Activated CD8-positive, alpha-beta T cell treated with anti-CD3 and anti-CD28 coated beads for 36 hours (primary cell): ENCODE measurements at regions of chr1 and their contacts with region 1.

Region 1: GRCh38 chr1:117128323-117129079 is 7.0 kb upstream of the TRIM45 start:
- DNase-seq: no peak
- ATAC-seq: no peak
- H3K4me3 Mint-ChIP-seq: no peak overlapping the region
- H3K27ac Mint-ChIP-seq: no peak overlapping the region
- H3K4me1 Mint-ChIP-seq: no peaks in the 10 kb centered on the region
- H3K27me3 Mint-ChIP-seq: peaks cover 3% of the 10 kb centered on the region
- CTCF ChIP-seq: peak; percentile 64

Region 2: DNA sequence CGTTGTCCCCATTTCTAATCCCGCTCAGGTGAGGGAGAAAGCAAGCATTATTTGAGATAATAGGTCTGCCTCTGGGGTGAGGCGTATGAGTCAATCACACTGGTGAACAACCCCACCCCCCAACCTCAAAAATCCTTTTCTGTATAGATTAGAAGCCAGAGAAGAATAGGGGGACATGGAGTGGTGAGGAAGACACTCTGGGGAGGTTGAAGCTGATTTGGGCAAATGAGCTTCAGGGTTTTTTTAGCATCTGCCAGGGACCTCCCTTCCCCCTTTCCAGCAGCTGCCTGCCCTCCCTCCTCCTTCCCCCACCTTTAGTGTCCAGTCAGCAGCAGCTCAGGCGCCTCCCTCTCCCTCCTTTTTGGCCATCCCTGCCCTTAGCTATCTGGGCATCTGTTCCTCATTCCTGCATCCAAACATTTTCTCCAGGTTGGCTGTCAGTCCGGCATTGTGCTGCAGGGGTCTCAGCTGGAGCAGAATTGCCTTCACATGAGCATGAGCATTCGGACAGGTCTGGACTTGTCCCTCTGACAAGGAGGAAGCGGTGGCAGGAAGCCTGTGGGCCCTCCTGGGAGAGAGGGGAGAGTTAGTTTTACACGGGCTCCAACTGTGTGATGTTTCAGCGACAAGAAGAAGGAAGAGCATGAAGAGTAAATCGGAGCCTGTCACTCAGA is 249.6 kb before region 1 on chr1:
- CTCF ChIA-PET with region 1: no interaction called
- POLR2A ChIA-PET with region 1: no interaction called
- intact Hi-C with region 1: no loop called
- DNase-seq: peak; percentile 34
- ATAC-seq: peak; percentile 38
- H3K4me3 Mint-ChIP-seq: no peak overlapping the region
- H3K27ac Mint-ChIP-seq: no peak overlapping the region
- H3K4me1 Mint-ChIP-seq: peaks cover 17% of the 10 kb centered on the region
- H3K27me3 Mint-ChIP-seq: no peaks in the 10 kb centered on the region
- CTCF ChIP-seq: no peak

Region 3: GRCh38 chr1:117067533-117068370 is 60.7 kb before region 1 on chr1:
- CTCF ChIA-PET with region 1: interaction called, 39 read pairs
- POLR2A ChIA-PET with region 1: interaction called, 3 read pairs
- intact Hi-C with region 1: loop called (anchors 5 kb)
- DNase-seq: peak; percentile 42
- ATAC-seq: peak; percentile 83
- H3K4me3 Mint-ChIP-seq: no peak overlapping the region
- H3K27ac Mint-ChIP-seq: no peak overlapping the region
- H3K4me1 Mint-ChIP-seq: peaks cover 40% of the 10 kb centered on the region
- H3K27me3 Mint-ChIP-seq: no peaks in the 10 kb centered on the region
- CTCF ChIP-seq: peak; percentile 62

Region 4: DNA sequence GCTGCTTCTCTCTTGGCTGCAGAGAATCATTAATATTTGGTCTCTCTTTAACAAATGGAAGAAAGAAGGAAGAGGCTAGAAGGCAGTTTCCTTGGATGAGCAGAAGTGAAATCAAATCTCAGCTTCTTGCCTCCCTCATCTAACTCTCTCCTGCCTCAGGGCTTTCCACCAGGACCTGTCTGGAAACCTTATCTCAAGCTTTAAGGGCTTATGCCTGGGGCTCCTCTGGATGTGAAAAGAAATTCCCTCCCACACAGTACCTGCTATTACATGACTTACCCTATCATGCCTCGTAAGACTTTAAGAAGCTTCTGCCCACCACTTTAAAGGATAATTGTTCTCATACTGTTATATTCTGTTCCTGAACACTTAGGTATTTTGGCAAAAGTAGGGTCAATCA is 73.3 kb after region 1 on chr1:
- CTCF ChIA-PET with region 1: no interaction called
- POLR2A ChIA-PET with region 1: no interaction called
- intact Hi-C with region 1: no loop called
- DNase-seq: no peak
- ATAC-seq: no peak
- H3K4me3 Mint-ChIP-seq: no peak overlapping the region
- H3K27ac Mint-ChIP-seq: no peak overlapping the region
- H3K4me1 Mint-ChIP-seq: no peaks in the 10 kb centered on the region
- H3K27me3 Mint-ChIP-seq: peaks cover 13% of the 10 kb centered on the region
- CTCF ChIP-seq: no peak